ENCODE measurements at regions of chr14 and their contacts with region 1.

Region 1: DNA sequence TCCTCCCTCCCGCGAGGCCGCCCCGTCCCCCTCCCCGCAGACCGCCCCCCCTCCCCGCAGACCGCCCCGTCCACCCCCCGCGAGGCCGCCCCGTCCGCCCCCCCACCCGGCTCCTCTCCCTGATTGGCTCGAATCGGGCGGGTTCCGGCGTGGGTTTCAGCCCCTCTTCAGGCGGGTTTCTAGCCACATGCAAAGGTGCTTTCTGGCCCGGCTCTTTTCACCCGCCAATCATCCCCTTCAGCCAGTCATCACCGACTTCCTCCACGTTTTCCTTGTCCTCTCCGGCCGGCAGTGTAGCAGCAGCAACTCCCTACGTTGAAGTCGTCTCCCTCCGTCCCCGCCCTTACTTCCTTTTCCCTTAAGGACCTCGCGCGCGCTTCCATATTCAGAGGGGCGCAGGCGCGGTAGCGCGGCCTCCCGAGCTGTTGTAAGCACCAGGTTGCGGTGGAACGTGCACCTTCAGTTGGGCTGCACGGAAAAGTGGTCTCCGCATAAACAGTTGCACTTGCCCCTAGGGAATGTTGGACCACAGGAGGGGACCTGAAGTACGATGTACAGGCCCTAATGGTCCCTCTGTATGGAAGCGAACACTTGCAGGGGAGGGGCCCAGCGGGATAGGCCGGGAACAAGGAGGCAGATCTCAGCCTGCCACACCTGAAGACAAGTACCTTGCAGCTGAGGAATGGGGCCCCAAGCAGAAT is 44.6 kb upstream of the ESR2 start:
- DNase-seq: peak; percentile 98
- H3K4me3 ChIP-seq: peak overlapping the region; percentile 65 to 81 (median 73)
- H3K27ac ChIP-seq: peak overlapping the region; percentile 85 to 91 (median 88)
- H3K4me1 ChIP-seq: peaks cover 0 to 14% (median 10%) of the 10 kb centered on the region in 4 donors
- H3K27me3 ChIP-seq: no peaks in the 10 kb centered on the region
- CTCF ChIP-seq: no peak
- EP300 ChIP-seq: no peak
- POLR2A ChIP-seq: peak; percentile 58 to 85

Region 2: GRCh38 chr14:64369201-64369600 is 30.4 kb after region 1 on chr14:
- intact Hi-C with region 1: no loop called
- DNase-seq: no peak
- H3K4me3 ChIP-seq: no peak overlapping the region
- H3K27ac ChIP-seq: no peak overlapping the region
- H3K4me1 ChIP-seq: no peaks in the 10 kb centered on the region
- H3K27me3 ChIP-seq: no peaks in the 10 kb centered on the region
- CTCF ChIP-seq: no peak
- EP300 ChIP-seq: no peak
- POLR2A ChIP-seq: no peak

Region 3: DNA sequence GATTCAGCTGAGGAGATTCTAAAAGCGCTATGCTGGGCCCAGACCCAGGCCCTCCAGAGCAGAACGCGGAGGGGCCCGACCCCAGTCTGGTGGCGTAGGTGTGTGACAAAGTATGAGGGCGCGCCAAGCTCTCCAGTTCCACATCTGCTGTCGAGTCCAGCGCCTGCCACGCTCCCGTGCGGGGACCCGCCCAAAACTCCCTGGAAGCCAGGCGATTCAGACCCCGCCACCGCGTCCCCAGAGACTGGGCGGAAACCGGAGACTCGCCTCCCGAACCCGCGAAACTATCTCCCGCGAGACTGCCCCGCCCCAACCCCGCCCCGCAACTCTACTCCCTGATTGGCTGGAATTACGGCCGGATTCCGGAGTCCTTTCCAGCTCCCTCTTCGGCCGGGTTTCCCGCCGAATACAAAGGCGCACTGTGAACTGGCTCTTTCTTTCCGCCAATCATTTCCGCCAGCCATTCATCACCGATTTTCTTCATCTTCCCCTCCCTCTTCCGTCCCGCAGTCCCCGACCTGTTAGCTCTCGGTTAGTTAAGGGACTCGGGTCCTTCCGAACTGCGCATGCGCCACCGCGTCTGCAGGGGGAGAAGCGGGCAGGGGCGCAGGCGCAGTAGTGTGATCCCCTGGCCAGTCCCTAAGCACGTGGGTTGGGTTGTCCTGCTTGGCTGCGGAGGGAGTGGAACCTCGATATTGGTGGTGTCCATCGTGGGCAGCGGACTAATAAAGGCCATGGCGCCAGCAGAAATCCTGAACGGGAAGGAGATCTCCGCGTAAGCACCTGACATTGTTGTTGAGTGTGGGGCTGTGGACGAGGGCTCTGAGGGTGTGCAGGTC is 49.1 kb after region 1 on chr14 and contains the start of gene MTHFD1:
- intact Hi-C with region 1: loop called (anchors 1 kb)
- DNase-seq: peak; percentile 100
- H3K4me3 ChIP-seq: peak within 1 kb of the TSS; percentile 62 to 72 (median 66)
- H3K27ac ChIP-seq: peak within 1 kb of the TSS; percentile 82 to 88 (median 88)
- H3K4me1 ChIP-seq: peaks cover 0 to 25% (median 21%) of the 10 kb centered on the region in 4 donors
- H3K27me3 ChIP-seq: no peaks in the 10 kb centered on the region
- CTCF ChIP-seq: no peak
- EP300 ChIP-seq: no peak
- POLR2A ChIP-seq: peak; percentile 38 to 42
- total RNA-seq, gene MTHFD1: 20.5 to 36.0 (median 26.1) TPM

Region 4: GRCh38 chr14:64465191-64465822 is 126.5 kb after region 1 on chr14 and contains the start of gene AKAP5:
- intact Hi-C with region 1: loop called (anchors 10 kb)
- DNase-seq: no peak
- H3K4me3 ChIP-seq: peak within 1 kb of the TSS; percentile 55 to 83 (median 74)
- H3K27ac ChIP-seq: peak within 1 kb of the TSS; percentile 72 to 80 (median 78)
- H3K4me1 ChIP-seq: peaks cover 0 to 14% (median 6%) of the 10 kb centered on the region in 4 donors
- H3K27me3 ChIP-seq: no peaks in the 10 kb centered on the region
- CTCF ChIP-seq: no peak
- EP300 ChIP-seq: no peak
- POLR2A ChIP-seq: no peak
- total RNA-seq, gene AKAP5: 0.33 to 1.7 (median 0.76) TPM

Region 5: GRCh38 chr14:64488590-64489099 is 149.9 kb after region 1 on chr14:
- intact Hi-C with region 1: loop called (anchors 5 kb)
- DNase-seq: no peak
- H3K4me3 ChIP-seq: no peak overlapping the region
- H3K27ac ChIP-seq: no peak overlapping the region
- H3K4me1 ChIP-seq: no peaks in the 10 kb centered on the region
- H3K27me3 ChIP-seq: no peaks in the 10 kb centered on the region
- CTCF ChIP-seq: no peak
- EP300 ChIP-seq: no peak
- POLR2A ChIP-seq: no peak

Region 6: DNA sequence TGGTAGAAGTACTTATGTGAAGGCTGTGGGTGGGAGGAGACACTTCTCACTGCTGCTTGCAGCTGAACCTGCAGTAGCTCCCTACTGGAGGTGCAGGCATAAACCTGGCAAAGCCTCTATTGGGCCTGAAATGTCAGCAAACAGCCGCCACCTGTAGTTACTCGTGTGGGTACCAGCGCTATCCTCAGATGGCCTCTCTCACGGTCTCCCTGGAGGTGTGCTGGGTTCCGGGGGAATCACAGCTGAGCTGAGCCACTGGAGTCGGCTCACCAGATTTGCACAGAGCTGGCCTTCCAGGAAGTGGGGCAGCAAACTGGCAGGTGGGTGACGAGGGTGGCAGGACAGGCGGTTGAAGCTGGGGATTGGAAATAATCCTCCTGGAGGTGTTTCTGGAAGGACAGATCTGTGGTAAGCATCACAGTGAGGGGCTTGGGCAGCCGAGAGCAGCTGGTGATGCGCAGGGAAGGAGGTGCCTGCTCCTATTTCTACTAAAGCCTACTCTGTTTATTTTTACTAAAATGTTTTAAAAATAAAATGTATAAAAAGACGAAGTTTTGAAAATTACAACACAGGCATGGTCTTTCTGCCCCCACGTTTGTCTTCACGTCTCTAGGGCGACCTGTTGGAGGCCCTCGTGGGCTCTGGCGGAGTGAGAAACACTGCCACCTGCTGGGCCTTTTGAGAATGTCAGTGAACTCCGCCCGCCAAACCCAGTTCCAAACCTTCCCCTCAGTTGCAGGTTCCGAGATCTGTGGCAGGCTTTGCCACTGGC is 297.6 kb after region 1 on chr14:
- intact Hi-C with region 1: loop called (anchors 10 kb)
- DNase-seq: peak; percentile 87
- H3K4me3 ChIP-seq: no peak overlapping the region
- H3K27ac ChIP-seq: peak overlapping the region in 3 of 4 donors; percentile 20 to 51 (median 33)
- H3K4me1 ChIP-seq: peaks cover 0 to 27% (median 11%) of the 10 kb centered on the region in 4 donors
- H3K27me3 ChIP-seq: no peaks in the 10 kb centered on the region
- CTCF ChIP-seq: peak; percentile 83 to 94 (median 90)
- EP300 ChIP-seq: no peak
- POLR2A ChIP-seq: no peak

Region 7: GRCh38 chr14:64914237-64914971 is 575.6 kb after region 1 on chr14 and contains the start of gene CHURC1:
- intact Hi-C with region 1: loop called (anchors 10 kb)
- DNase-seq: peak; percentile 99
- H3K4me3 ChIP-seq: peak within 1 kb of the TSS; percentile 65 to 94 (median 92)
- H3K27ac ChIP-seq: peak within 1 kb of the TSS; percentile 86 to 98 (median 94)
- H3K4me1 ChIP-seq: peaks cover 0 to 38% (median 30%) of the 10 kb centered on the region in 4 donors
- H3K27me3 ChIP-seq: no peaks in the 10 kb centered on the region
- CTCF ChIP-seq: no peak
- EP300 ChIP-seq: no peak
- POLR2A ChIP-seq: peak; percentile 71 to 84
- total RNA-seq, gene CHURC1: 110 to 161 (median 142) TPM